K562 (cell line): ENCODE measurements at regions of chr1 and their contacts with region 1.

Region 1: GRCh38 chr1:152486400-152487006 is 24.1 kb upstream of the LCE5A start:
- DNase-seq: peak; percentile 35 to 51 (median 48)
- ATAC-seq: peak; percentile 80
- H3K4me3 ChIP-seq: no peak overlapping the region
- H3K27ac ChIP-seq: no peak overlapping the region
- H3K4me1 ChIP-seq: no peaks in the 10 kb centered on the region
- H3K27me3 ChIP-seq: no peaks in the 10 kb centered on the region
- CTCF ChIP-seq: peak; percentile 53 to 63 (median 62)
- EP300 ChIP-seq: no peak
- POLR2A ChIP-seq: no peak
- RAD21 ChIP-seq: peak in 1 of 2 experiments; percentile 28; a peak in 1 of 4 replicates

Region 2: GRCh38 chr1:152533327-152533938 is 46.9 kb after region 1 on chr1:
- CTCF ChIA-PET with region 1: interaction called, 3 read pairs
- POLR2A ChIA-PET with region 1: no interaction called
- in situ Hi-C with region 1: no loop called
- intact Hi-C with region 1: loop called (anchors 5 kb)
- DNase-seq: peak; percentile 39 to 64 (median 58)
- ATAC-seq: peak; percentile 78; the same call in 2 of the 3 replicates
- H3K4me3 ChIP-seq: no peak overlapping the region
- H3K27ac ChIP-seq: no peak overlapping the region
- H3K4me1 ChIP-seq: no peaks in the 10 kb centered on the region
- H3K27me3 ChIP-seq: peaks cover 2 to 5% of the 10 kb centered on the region in 2 experiments; a peak in 2 of 5 replicates
- CTCF ChIP-seq: peak; percentile 73 to 79 (median 74)
- EP300 ChIP-seq: no peak
- POLR2A ChIP-seq: no peak
- RAD21 ChIP-seq: peak in 1 of 2 experiments; percentile 51; a peak in 2 of 4 replicates

Region 3: DNA sequence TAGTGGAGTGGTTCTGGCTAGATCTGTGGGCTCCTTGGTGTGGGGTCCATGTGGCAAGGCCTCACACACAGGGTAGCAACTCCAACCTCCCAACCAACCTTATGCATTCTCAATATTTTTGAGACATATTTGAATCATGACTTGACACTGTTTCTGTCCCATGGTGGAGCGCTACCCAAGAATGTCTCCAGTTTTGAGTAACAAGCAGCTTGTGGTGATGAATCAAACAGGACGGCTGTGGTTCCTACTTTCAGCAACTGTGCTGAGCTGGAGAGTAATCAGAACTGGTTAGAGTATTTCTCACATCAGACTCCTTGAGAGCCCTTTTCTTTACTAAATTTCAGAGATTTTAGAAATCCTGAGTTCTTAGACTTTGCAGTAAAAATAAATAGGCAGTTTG is 90.7 kb after region 1 on chr1:
- CTCF ChIA-PET with region 1: no interaction called
- POLR2A ChIA-PET with region 1: no interaction called
- in situ Hi-C with region 1: no loop called
- intact Hi-C with region 1: no loop called
- DNase-seq: no peak
- ATAC-seq: no peak
- H3K4me3 ChIP-seq: no peak overlapping the region
- H3K27ac ChIP-seq: no peak overlapping the region
- H3K4me1 ChIP-seq: no peaks in the 10 kb centered on the region
- H3K27me3 ChIP-seq: no peaks in the 10 kb centered on the region
- CTCF ChIP-seq: no peak
- EP300 ChIP-seq: no peak
- POLR2A ChIP-seq: no peak
- RAD21 ChIP-seq: no peak

Region 4: DNA sequence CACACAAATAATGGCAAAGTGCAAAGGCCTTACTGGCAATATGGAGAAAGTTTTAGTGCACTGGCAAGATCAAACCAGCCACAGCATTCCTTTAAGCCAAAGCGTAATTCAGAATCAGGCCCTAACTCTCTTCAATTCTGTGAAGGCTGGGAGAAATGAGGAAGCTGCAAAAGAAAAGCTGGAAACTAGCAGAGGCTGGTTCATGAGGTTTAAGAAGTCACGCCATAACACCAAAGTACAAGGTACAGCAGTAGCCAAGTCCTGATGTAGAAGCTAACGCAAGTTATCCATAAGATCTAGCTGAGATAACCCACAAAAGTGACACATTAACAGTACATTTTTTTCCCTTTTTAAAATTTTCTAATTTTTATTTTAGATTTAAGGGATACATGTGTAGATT is 1345.8 kb after region 1 on chr1:
- CTCF ChIA-PET with region 1: no interaction called
- POLR2A ChIA-PET with region 1: no interaction called
- in situ Hi-C with region 1: no loop called
- intact Hi-C with region 1: no loop called
- DNase-seq: no peak
- ATAC-seq: no peak
- H3K4me3 ChIP-seq: no peak overlapping the region
- H3K27ac ChIP-seq: no peak overlapping the region
- H3K4me1 ChIP-seq: peaks cover 0 to 3% of the 10 kb centered on the region in 2 experiments; a peak in 1 of 5 replicates
- H3K27me3 ChIP-seq: no peaks in the 10 kb centered on the region
- CTCF ChIP-seq: no peak
- EP300 ChIP-seq: no peak
- POLR2A ChIP-seq: no peak
- RAD21 ChIP-seq: no peak